ENCODE measurements at regions of chr15 and their contacts with region 1.

Region 1: GRCh38 chr15:54960266-54960665 is 236.5 kb downstream of the RSL24D1 start:
- DNase-seq: no peak
- H3K4me3 ChIP-seq: no peak overlapping the region
- H3K27ac ChIP-seq: peak overlapping the region; percentile 84 to 88
- H3K4me1 ChIP-seq: peaks cover 7 to 25% of the 10 kb centered on the region in 2 donors
- H3K27me3 ChIP-seq: no peaks in the 10 kb centered on the region
- CTCF ChIP-seq: no peak

Region 2: DNA sequence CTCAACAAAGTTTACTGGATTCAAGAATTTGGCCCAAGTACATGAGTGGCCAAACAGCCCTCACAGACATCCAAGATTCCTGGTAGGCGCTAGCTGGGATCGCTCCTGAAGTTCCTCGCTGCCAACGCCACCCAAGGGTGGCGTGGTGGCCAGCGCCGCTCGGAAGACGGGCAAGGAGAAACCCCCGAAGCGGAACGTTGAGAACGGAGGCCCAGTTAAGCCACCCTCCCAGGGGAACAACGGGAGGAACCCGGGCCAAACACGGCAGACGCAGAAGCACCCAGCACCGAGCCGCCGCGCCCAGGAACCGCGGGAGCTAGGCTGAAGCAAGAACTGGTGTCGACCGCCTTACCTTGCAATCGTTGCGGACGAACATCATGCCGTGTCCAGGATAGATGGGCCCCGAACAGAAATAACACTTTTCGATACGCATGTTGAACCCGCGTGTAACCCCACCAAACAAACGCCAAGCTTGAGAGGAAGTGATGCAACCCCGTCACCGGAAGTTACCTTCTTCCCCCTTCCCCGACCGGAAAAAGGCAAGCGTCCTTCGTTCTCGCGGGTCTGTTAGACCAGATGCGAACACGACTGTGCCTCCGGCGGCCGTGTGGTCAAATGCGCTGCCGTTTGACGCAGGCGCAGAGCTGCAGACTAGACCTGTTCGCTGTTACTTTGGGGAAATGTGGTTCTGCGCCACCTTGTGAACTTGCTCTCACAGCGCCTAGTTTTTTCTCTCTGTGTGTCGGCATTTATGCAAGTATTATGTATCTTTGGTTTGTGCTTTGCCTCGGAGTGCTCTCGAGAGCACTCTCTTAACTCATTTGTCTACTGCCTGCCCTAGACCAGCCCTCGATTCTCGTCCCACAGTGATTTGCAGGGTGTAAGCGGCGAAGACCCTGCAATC is 236.4 kb after region 1 on chr15 and contains the start of gene RSL24D1:
- intact Hi-C with region 1: loop called (anchors 5 kb)
- DNase-seq: peak; percentile 87 to 99
- H3K4me3 ChIP-seq: peak within 1 kb of the TSS; percentile 82 to 95
- H3K27ac ChIP-seq: peak within 1 kb of the TSS; percentile 90 to 96
- H3K4me1 ChIP-seq: peaks cover 4 to 14% of the 10 kb centered on the region in 2 donors
- H3K27me3 ChIP-seq: no peaks in the 10 kb centered on the region
- CTCF ChIP-seq: peak; percentile 48 to 57 (median 49)
- total RNA-seq, gene RSL24D1: 15.3 TPM

Measured in ascending aorta (tissue), 2 donors.